ENCODE measurements at regions of chr3 and their contacts with region 1.

Region 1: DNA sequence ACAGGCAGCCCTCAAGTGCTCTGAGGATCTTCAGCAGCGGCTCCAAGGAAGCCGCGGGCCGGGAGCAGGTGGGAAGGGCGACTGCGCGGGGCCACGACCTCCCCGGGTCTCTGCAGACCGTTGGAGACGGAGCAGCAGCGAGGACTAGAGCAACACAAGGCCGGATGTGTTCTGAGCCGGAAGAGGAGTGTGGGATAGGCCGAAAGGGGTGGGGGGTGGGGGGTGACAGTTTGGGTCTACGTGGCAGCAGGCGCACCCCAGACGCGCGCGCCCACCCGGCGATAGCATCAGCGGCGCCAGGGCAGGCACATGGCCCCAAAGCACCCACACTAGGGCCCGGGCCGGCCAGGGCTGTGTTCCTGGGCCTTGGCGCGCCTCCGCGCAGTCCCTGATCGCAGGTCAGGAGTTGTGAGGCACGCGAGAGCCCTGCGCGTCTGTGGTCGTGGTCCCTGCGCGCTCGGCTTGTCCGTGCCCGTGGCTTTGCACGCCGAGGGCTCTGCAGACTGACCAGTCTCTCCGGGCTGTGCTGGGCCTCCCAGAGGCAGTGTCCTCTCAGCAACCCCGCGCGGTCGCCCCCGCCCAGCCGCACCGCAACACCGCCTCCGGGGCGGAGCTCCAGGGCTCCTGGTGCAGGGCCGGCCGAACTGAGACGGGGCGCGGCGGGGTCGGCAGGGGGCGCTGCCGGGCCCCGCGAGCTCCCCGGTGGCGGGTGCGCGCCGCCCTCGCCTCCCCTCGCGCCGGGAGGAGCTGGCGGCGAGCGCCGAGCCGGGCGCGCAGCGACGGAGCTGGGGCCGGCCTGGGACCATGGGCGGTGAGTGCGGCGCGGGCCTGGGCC is at the start of gene PXYLP1:
- DNase-seq: peak; percentile 99
- H3K4me3 Mint-ChIP-seq: peak within 1 kb of the TSS; percentile 97
- H3K27ac Mint-ChIP-seq: peak within 1 kb of the TSS; percentile 98
- H3K4me1 Mint-ChIP-seq: peaks cover 49% of the 10 kb centered on the region
- H3K27me3 Mint-ChIP-seq: peaks cover 10% of the 10 kb centered on the region
- total RNA-seq, gene PXYLP1: 10.7 and 11.7 TPM in 2 replicates

Region 2: GRCh38 chr3:141255846-141256261 is 24.5 kb after region 1 on chr3:
- intact Hi-C with region 1: loop called (anchors 1 kb)
- DNase-seq: peak; percentile 82
- H3K4me3 Mint-ChIP-seq: peak overlapping the region; percentile 31
- H3K27ac Mint-ChIP-seq: peak overlapping the region; percentile 43
- H3K4me1 Mint-ChIP-seq: peaks cover 36% of the 10 kb centered on the region
- H3K27me3 Mint-ChIP-seq: no peaks in the 10 kb centered on the region

Region 3: GRCh38 chr3:141279077-141279967 is 48.0 kb after region 1 on chr3:
- intact Hi-C with region 1: loop called (anchors 1 kb)
- DNase-seq: peak; percentile 75
- H3K4me3 Mint-ChIP-seq: no peak overlapping the region
- H3K27ac Mint-ChIP-seq: no peak overlapping the region
- H3K4me1 Mint-ChIP-seq: peaks cover 19% of the 10 kb centered on the region
- H3K27me3 Mint-ChIP-seq: no peaks in the 10 kb centered on the region

Region 4: DNA sequence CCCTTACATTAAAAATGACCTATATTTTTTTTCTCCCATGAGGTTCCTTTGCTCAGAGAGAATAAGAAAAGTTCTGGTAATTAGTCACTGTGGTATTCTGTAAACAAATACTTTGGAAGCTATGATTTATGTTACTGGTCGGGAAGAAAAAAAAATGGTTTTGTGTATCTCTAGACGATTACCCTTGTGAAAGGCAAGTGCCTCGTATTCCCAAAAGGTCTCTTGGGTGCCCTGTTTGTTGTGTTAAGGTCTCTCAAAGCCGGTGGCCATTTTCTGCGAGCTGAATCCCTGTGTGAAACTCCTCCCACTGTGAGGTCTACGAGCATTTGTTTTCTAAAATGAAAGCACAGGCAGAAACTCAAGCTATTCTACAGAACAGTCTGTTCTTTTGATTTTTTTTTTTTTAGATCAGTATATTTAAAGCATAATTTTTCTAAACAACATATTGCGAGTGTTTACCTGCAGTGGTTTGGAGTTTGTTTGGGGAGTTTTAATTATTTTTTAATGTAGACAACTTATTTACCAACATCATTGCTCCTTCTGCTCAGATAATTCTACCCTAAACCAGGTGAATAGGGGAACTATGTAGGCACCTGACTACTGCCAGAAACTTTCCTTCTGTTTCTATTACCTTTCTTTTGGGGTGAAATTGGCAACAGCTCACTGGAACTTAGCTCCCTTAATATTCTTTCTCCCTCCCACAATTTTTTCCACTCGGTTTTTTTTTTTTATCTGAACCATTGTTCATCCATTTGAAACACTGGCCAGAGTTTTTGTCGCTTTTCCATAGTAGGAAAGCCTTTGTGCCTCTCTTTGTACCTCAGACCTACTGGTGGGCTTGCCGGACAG is 181.0 kb after region 1 on chr3:
- intact Hi-C with region 1: loop called (anchors 5 kb)
- DNase-seq: peak; percentile 88
- H3K4me3 Mint-ChIP-seq: peak overlapping the region; percentile 83
- H3K27ac Mint-ChIP-seq: peak overlapping the region; percentile 99
- H3K4me1 Mint-ChIP-seq: peaks cover 48% of the 10 kb centered on the region
- H3K27me3 Mint-ChIP-seq: no peaks in the 10 kb centered on the region

Region 5: GRCh38 chr3:143001369-143002082 is 1770.2 kb after region 1 on chr3 and contains the start of gene U2SURP:
- intact Hi-C with region 1: loop called (anchors 2 kb)
- DNase-seq: peak; percentile 97
- H3K4me3 Mint-ChIP-seq: peak within 1 kb of the TSS; percentile 96
- H3K27ac Mint-ChIP-seq: peak within 1 kb of the TSS; percentile 97
- H3K4me1 Mint-ChIP-seq: peaks cover 24% of the 10 kb centered on the region
- H3K27me3 Mint-ChIP-seq: peaks cover 8% of the 10 kb centered on the region
- total RNA-seq, gene U2SURP: 189 and 212 TPM in 2 replicates

Measured in activated CD4-positive, alpha-beta T cell treated with anti-CD3 and anti-CD28 coated beads, Interleukin-2, amount 10 ng/mL, durations not matched to agents 24 days and 14 days (primary cell).